OCI-LY7 (cell line): ENCODE measurements at regions of chr3 and their contacts with region 1.

Region 1: DNA sequence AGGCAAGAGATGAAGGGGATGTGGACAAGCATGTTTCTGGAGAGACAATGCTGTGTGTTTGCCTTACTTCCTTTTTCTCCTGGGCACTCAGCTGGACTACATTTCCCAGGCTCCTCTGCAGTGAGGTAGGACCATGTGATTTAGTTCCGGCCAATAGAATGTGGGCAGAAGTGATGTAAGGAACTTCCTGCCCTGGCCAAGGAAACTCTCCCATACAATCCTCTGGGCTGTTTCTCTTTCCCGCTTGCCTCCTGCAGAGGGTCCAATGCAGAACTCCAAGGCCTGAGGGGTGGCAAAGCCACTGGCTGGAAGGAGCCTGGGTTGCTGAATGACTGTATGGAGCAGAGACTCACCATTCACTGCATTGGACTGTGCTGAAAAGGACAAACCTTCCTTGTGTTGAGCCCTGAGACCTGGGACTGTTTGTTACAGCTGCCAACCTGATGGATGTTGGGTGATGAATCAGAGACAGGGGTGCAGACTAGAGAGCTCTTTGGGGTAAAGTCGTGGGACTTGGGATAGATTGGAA is 82.7 kb upstream of the SLC6A6 start:
- DNase-seq: peak; percentile 93
- H3K4me3 ChIP-seq: peak overlapping the region; percentile 67
- H3K27ac ChIP-seq: peak overlapping the region; percentile 17
- H3K4me1 ChIP-seq: peaks cover 13% of the 10 kb centered on the region
- CTCF ChIP-seq: no peak

Region 2: GRCh38 chr3:13022348-13023234 is 1297.1 kb before region 1 on chr3:
- CTCF ChIA-PET with region 1: no interaction called
- POLR2A ChIA-PET with region 1: no interaction called
- intact Hi-C with region 1: loop called (anchors 10 kb)
- DNase-seq: peak; percentile 75
- H3K4me3 ChIP-seq: peak overlapping the region; percentile 70
- H3K27ac ChIP-seq: peak overlapping the region; percentile 67
- H3K4me1 ChIP-seq: peaks cover 65% of the 10 kb centered on the region
- CTCF ChIP-seq: no peak

Region 3: DNA sequence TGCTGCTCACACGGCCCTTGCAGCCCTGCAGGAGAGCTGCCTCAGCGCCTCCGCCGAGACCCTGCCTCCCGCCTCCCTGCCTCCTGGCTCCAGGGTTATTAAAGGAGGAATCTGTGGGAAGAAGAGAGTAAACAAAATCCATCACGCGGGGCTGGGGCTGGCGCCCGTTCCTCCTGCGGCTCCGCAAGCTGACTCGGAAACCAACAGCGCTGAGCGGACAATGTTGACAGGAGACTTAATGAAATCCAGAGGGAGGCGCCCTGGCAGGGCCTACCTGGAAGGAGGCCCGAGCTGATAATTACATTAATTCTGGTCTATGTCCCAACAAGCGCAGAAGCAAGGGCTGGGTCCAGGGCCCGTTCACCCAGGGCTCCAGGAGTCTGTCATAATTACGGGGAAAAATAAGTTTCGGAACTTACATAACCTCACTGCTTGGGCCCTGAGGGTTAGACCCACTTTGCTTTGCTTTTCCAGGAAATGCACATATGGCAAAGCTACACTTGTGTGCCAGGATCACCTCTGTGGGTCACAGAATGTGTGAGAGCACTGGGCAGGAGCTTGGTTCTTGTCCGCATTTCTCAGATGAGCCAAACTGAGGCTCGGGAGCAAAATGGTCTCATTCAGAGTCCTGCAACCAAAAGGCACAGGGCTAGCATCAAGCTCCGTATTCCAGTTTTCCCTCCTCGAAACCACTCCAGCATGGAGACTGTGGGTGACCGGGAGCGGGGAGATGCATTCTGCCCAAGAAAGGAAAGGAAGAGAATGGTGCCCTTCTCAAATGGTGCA is 38.9 kb after region 1 on chr3:
- CTCF ChIA-PET with region 1: no interaction called
- POLR2A ChIA-PET with region 1: no interaction called
- intact Hi-C with region 1: no loop called
- DNase-seq: no peak
- H3K4me3 ChIP-seq: no peak overlapping the region
- H3K27ac ChIP-seq: no peak overlapping the region
- H3K4me1 ChIP-seq: peaks cover 12% of the 10 kb centered on the region
- CTCF ChIP-seq: no peak

Region 4: GRCh38 chr3:15148614-15149013 is 828.9 kb after region 1 on chr3:
- CTCF ChIA-PET with region 1: no interaction called
- POLR2A ChIA-PET with region 1: no interaction called
- intact Hi-C with region 1: no loop called
- DNase-seq: peak; percentile 9
- H3K4me3 ChIP-seq: no peak overlapping the region
- H3K27ac ChIP-seq: no peak overlapping the region
- H3K4me1 ChIP-seq: no peaks in the 10 kb centered on the region
- CTCF ChIP-seq: no peak